AG04449 (cell line): ENCODE measurements at regions of chr2 and their contacts with region 1.

Region 1: GRCh38 chr2:200450288-200450687 is 59.6 kb downstream of the KCTD18 start:
- DNase-seq: no peak
- H3K4me3 ChIP-seq: no peak overlapping the region
- CTCF ChIP-seq: no peak

Region 2: GRCh38 chr2:200239216-200239615 is 211.1 kb before region 1 on chr2:
- CTCF ChIA-PET with region 1: no interaction called
- POLR2A ChIA-PET with region 1: no interaction called
- DNase-seq: no peak
- H3K4me3 ChIP-seq: no peak overlapping the region
- CTCF ChIP-seq: no peak

Region 3: DNA sequence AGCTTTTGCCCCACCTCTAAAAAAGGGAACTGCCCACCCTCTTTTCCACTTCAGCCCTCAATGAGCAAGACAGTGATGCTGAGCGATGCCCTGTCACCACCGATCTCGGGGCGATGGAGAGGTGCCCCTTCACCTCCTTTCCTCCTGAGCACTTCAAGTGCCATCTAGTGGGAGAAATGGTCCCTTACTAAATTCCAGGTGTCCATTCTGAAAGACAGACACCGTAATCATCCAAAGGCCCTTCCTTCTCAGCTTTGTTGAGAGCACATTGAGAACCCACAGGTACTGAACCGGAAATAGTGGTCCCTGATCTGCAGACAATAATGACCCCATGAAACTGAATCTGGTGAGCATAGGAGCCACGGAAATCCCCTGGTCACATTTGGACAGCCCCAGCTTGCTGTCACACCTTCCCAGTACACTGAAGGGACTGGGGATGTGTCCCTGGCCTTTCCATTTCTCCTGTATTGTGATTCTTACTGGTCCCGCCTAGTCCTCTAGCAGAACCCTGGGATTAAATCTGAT is 21.1 kb after region 1 on chr2:
- CTCF ChIA-PET with region 1: interaction called, 10 read pairs
- POLR2A ChIA-PET with region 1: no interaction called
- DNase-seq: no peak
- H3K4me3 ChIP-seq: no peak overlapping the region
- CTCF ChIP-seq: peak; percentile 52

Region 4: DNA sequence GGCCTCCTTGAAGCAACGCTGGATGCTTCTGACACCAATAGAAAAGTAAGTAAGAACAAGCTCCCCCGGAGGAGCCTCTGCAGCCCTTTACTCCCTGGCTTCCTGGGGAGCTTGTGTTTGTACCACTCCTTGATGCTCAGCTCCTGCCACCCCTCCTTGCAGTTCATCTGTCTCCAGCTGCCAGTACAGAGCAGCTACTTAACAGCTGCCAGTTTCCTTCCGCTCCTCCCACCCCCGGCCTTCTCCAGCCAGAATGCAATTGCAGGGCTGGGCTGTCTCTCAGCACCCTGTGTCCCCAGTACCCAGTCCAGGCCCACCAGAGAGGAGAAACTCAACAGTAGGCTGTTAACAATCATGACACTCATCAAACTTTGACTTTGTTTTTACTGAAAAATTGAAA is 244.9 kb after region 1 on chr2:
- CTCF ChIA-PET with region 1: no interaction called
- POLR2A ChIA-PET with region 1: no interaction called
- DNase-seq: no peak
- H3K4me3 ChIP-seq: no peak overlapping the region
- CTCF ChIP-seq: no peak